Cardiac septum (tissue), 1 donor: ENCODE measurements at regions of chr3 and their contacts with region 1.

Region 1: GRCh38 chr3:193982258-193982659 is 153.7 kb upstream of the HES1 start:
- DNase-seq: peak; percentile 89

Region 2: DNA sequence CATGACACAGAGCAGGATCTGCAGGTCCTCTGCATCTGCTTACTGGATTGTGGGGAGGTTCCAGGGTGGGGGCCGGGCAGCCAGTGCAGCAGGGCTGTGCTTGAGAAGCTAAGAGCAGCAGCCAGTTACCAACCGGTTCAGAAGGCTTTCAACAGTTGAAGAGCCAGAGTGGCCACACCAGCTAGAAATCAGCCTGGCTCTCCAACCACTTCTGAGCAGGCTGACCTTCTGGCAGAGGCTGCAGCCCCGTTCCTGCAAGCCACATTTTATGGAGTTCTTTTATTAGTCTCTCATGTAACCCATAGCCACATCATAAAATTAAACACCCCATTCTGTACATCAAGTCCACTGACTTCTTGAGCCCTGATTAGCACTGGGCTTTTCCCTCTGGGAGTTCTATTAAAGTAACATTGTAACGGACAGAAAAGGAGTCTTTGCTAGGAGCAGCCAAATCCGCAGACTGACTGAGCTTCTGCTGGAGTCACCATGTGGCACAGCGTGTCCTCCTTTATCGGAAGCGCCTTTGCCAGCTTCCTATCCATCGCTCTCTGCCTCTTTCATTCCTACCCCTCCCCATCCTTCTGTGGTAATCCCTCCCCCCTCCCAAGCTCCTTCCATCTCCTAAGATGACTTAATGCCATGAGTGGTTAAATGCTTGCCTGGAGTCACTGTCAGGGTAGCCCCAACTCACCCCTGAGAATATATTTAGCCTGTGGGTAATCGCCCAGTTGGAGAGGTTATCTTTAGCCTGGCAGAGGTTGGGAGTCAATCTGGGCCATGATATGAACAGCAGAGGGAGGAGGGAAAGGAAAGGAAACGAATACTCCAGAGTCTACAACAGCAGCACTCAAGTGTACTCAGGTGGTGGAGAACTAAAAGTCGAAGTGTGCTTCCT is 15.2 kb after region 1 on chr3:
- intact Hi-C with region 1: loop called (anchors 2 kb)
- DNase-seq: no peak

Region 3: DNA sequence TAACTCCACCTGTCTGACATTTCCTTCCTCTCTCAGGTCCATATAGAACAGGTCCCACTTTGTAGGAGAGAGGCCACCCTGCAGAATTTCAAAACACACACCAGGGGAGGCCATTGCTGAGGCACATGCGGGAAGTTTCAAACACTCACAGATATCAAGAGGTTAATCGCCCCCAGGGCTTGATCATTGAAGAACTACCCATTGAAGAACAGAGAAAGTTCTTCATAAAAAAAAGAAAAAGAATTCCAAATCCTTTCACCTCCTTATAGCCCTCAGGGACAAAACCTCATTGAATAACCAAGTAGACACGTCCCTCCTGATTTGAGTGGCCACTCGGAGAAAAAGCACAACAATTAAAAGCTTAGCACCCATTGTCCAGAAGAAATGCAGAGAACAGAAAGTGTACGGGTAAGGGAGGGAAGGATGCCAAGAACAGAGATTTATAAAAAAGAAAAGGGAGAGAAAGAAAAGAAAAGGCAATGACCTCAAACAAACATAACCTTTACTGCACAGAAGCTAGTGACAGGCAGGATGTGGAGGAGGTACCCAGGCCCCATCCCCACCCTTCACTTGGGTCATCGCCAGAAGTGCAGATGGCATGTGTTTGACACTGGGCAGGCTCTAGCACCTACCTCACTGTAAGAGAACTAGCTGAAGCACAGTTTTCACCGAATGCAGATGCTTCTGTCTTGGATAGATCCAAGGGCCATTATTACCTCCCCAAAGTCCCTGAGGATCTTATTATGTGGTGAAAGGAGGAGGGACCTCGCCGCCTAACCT is 41.4 kb after region 1 on chr3:
- intact Hi-C with region 1: no loop called
- DNase-seq: no peak